GM13977 (cell line): ENCODE measurements at regions of chr2 and their contacts with region 1.

Region 1: GRCh38 chr2:174341286-174341994 is 6.7 kb downstream of the SP9 start:
- DNase-seq: peak; percentile 90
- CTCF ChIP-seq: peak; percentile 99

Region 2: GRCh38 chr2:173402405-173402974 is 939.0 kb before region 1 on chr2:
- in situ Hi-C with region 1: loop called (anchors 10 kb)
- DNase-seq: peak; percentile 76
- CTCF ChIP-seq: peak; percentile 89

Region 3: DNA sequence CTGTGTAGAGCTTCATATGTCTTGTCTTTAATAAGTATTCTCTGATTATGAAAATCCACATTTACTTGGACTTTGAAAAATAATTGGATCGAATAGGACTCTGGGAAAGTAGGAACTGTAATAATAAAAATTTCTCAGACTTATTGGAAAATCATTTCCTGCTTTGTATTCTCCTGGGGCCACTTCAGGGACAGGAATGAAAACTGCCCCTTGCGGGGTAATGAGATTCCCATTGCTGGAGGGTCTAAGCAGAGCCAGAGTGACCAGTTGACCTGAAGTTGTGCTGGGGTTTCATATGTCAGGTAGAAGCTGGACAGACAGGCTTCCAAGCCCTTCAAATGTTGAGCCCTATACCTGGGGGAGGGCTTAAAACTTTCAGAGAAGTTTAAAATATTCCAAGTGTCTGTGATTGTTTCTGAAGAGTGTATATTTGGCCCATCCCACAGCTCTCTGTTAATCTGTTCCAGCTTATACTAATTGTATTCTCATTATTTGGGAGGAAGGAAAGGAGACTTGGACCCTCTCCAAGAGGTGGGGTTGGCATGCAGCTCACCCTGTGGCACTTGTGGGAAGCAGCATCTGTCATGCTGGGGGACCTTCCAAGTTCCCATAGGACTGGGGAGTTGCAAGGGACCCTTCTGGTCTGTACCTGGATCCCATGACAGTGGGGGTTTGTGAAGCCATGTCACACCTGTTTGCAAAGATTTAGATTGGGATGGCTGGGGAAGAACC is 1108.8 kb after region 1 on chr2:
- in situ Hi-C with region 1: no loop called
- DNase-seq: no peak
- CTCF ChIP-seq: no peak

Region 4: DNA sequence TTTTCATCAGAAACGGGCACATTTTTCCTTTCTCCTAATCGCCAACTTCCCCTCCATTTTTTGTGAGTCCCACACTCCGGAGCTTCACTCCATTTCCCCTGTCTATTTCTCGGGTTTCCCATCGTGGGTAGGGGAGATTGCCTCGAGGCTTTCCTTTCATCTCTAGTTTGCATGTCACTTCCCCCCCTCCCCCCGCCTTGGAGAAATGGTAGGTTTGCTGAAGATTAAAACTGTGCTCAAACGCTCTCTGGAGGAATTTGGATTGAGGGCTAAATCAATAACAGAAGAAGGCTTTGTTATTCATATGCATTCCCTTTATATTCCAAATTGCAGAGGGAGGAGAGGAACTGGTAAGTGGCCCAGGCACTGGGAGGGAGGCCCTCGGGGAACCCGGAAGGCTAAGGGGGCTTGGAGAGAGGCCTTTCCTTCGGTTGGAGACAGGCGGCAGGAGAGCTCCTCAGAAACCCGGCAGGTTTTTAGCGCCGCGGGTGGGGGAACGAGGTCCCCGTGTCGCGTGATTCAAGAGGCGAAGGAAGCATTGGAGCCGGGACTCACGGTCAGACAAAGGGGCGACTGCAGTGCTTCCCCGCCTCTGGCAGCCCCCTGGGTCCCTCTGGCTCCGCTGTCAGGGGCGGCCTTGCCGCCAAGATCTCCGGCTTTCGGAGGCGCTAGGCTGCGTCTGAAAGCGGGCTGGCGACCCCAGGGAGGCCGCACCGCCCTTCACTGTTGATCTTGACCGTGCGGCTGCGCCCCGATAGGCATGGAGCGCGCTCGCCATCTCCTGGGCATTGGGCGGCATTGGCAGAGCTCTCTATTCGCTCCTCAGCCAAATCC is 1755.8 kb after region 1 on chr2:
- in situ Hi-C with region 1: loop called (anchors 25 kb)
- DNase-seq: peak; percentile 88
- CTCF ChIP-seq: peak; percentile 93